ENCODE measurements at regions of chr21 and their contacts with region 1.

Region 1: DNA sequence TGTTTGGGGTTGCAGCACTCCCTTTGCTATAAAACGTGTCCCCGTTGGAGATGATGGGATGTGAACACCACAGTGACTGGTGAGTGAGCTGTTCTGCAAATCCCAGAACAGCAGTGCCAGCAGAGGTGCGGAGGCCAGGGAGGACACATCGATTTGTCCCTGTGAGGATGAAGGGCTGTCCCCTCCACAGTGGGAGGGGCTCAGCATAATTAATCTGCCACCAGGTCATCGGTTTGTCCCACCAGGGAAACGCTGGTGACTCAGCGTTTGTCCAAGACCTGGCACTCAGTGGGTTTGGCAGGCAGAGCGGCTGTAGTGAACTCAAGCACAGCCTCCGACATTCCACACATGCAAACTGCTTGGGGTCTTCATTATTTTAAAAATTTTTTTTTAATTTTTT is 22.8 kb upstream of the PDE9A start:
- DNase-seq: no peak
- ATAC-seq: no peak
- H3K4me3 ChIP-seq: no peak overlapping the region
- H3K4me3 Mint-ChIP-seq: no peak overlapping the region
- H3K27ac ChIP-seq: no peak overlapping the region
- H3K27ac Mint-ChIP-seq: no peak overlapping the region
- H3K4me1 ChIP-seq: peaks cover 16% of the 10 kb centered on the region
- H3K4me1 Mint-ChIP-seq: no peaks in the 10 kb centered on the region
- H3K27me3 ChIP-seq: no peaks in the 10 kb centered on the region
- H3K27me3 Mint-ChIP-seq: no peaks in the 10 kb centered on the region
- CTCF ChIP-seq: no peak

Region 2: GRCh38 chr21:42614811-42615659 is 15.6 kb before region 1 on chr21:
- CTCF ChIA-PET with region 1: no interaction called
- POLR2A ChIA-PET with region 1: no interaction called
- intact Hi-C with region 1: loop called in 1 of 2 experiments (anchors 1 kb)
- DNase-seq: peak; percentile 26 to 87 (median 38)
- ATAC-seq: peak; percentile 66
- H3K4me3 ChIP-seq: peak overlapping the region; percentile 51
- H3K4me3 Mint-ChIP-seq: no peak overlapping the region
- H3K27ac ChIP-seq: peak overlapping the region; percentile 0 to 55
- H3K27ac Mint-ChIP-seq: no peak overlapping the region
- H3K4me1 ChIP-seq: peaks cover 37% of the 10 kb centered on the region
- H3K4me1 Mint-ChIP-seq: peaks cover 5% of the 10 kb centered on the region
- H3K27me3 ChIP-seq: no peaks in the 10 kb centered on the region
- H3K27me3 Mint-ChIP-seq: no peaks in the 10 kb centered on the region
- CTCF ChIP-seq: no peak